Activated T-helper 1 cell treated with anti-CD3 and anti-CD28 coated beads, Interleukin-12 subunit alpha, Interleukin-12 subunit beta, Interleukin-2, Interleukin-4 antibody, amounts not matched to agents 30 ng/mL and 10 ng/mL and 1 ng/mL, durations not matched to agents 14 hours and 24 hours and 36 hours (primary cell): ENCODE measurements at regions of chr13 and their contacts with region 1.

Region 1: DNA sequence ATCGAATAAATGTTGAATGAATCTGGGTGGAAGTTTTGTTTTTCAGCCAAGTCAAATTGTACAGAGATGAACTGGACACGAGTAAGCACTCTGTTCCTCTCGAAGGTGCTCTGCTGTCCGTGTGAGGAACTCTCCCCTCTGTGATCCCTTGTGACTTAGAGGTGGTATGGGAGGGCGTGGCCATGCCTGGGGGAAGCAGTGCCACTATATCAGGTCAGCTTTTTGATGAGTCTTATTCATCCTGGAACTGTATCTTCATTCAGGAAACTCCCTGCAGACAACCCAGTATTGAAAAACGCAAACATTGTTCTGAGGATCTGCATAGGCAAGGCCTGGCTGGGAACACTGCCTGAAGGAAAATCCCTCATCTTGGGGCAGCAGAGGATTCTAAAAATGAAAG is 45.7 kb upstream of the FLT1 start:
- DNase-seq: no peak
- H3K4me3 Mint-ChIP-seq: no peak overlapping the region
- H3K27ac Mint-ChIP-seq: peak overlapping the region; percentile 84
- H3K4me1 Mint-ChIP-seq: peaks cover 32% of the 10 kb centered on the region
- H3K27me3 Mint-ChIP-seq: no peaks in the 10 kb centered on the region

Region 2: GRCh38 chr13:28574617-28575142 is 34.1 kb after region 1 on chr13:
- intact Hi-C with region 1: loop called (anchors 1 kb)
- DNase-seq: peak; percentile 6
- H3K4me3 Mint-ChIP-seq: no peak overlapping the region
- H3K27ac Mint-ChIP-seq: peak overlapping the region; percentile 84
- H3K4me1 Mint-ChIP-seq: peaks cover 16% of the 10 kb centered on the region
- H3K27me3 Mint-ChIP-seq: peaks cover 9% of the 10 kb centered on the region

Region 3: GRCh38 chr13:28611654-28612131 is 71.1 kb after region 1 on chr13:
- intact Hi-C with region 1: loop called (anchors 1 kb)
- DNase-seq: peak; percentile 19
- H3K4me3 Mint-ChIP-seq: peak overlapping the region; percentile 46
- H3K27ac Mint-ChIP-seq: peak overlapping the region; percentile 57
- H3K4me1 Mint-ChIP-seq: peaks cover 41% of the 10 kb centered on the region
- H3K27me3 Mint-ChIP-seq: no peaks in the 10 kb centered on the region